Esophagus muscularis mucosa (tissue), 4 donors: ENCODE measurements at regions of chr19 and their contacts with region 1.

Region 1: GRCh38 chr19:7652061-7652641 is 15.2 kb downstream of the STXBP2 start:
- DNase-seq: peak; percentile 97
- H3K4me3 ChIP-seq: peak overlapping the region; percentile 25 to 39 (median 28)
- H3K27ac ChIP-seq: no peak overlapping the region
- H3K4me1 ChIP-seq: peaks cover 0 to 8% (median 6%) of the 10 kb centered on the region in 4 donors
- H3K27me3 ChIP-seq: peaks cover 0 to 44% (median 0%) of the 10 kb centered on the region in 4 donors
- CTCF ChIP-seq: peak in 2 of 3 experiments; percentile 95 to 98
- EP300 ChIP-seq: no peak
- POLR2A ChIP-seq: no peak

Region 2: GRCh38 chr19:7680606-7681339 is 28.6 kb after region 1 on chr19 and contains the start of gene TRAPPC5:
- intact Hi-C with region 1: loop called (anchors 1 kb)
- DNase-seq: no peak
- H3K4me3 ChIP-seq: peak within 1 kb of the TSS; percentile 75 to 100 (median 88)
- H3K27ac ChIP-seq: peak within 1 kb of the TSS; percentile 78 to 90 (median 84)
- H3K4me1 ChIP-seq: peaks cover 10 to 29% (median 22%) of the 10 kb centered on the region in 4 donors
- H3K27me3 ChIP-seq: peaks cover 0 to 46% (median 3%) of the 10 kb centered on the region in 4 donors
- CTCF ChIP-seq: peak; percentile 99 to 100 (median 99)
- EP300 ChIP-seq: no peak
- POLR2A ChIP-seq: no peak
- total RNA-seq, gene TRAPPC5: 12.5 to 84.7 (median 64.8) TPM